Activated CD8-positive, alpha-beta T cell treated with anti-CD3 and anti-CD28 coated beads for 36 hours (primary cell): ENCODE measurements at regions of chr1 and their contacts with region 1.

Region 1: DNA sequence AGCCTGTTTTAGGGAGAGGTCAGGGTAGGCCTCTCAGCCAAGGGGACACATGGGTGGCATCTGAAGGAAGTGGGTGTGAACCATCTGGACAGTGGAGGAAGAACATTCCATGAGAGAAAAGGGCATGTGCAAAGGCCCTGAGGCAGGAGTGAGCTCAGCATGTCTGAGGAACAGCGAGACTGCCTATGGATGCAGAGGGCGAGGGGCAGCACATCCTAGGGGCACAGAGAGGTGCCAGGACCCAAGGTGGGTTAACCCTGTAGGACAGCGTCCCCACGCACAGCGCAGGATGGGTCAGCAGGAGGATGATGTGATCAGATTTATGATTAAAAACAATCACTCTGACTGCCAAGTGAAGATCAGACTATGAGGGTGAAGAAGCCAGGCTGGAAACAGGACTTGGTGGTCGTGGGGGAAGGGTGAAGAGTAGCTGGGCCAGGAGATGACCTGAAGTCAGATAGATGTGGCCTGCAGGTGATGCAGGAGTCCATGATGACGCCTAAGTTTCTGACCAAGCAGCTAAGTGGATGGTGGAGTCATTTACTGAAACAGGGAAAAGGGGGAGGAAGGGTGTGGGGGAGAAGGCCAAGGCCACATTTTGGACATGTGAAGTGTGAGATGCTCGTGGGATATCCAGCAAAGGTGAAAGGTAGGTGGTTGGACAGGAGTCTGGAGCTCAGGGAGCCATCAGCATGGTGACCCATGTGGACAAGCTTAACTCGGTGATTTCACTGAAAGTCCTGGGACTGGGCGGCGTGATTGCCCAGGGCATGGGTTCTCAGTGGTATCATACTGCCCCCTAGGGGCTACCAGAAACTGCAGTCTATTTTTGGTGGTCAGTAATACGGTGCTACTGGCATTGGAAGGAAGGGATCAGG is 37.8 kb downstream of the PABPC4 start:
- DNase-seq: peak; percentile 62
- ATAC-seq: peak; percentile 90
- H3K4me3 Mint-ChIP-seq: no peak overlapping the region
- H3K27ac Mint-ChIP-seq: no peak overlapping the region
- H3K4me1 Mint-ChIP-seq: peaks cover 2% of the 10 kb centered on the region
- H3K27me3 Mint-ChIP-seq: no peaks in the 10 kb centered on the region
- CTCF ChIP-seq: peak; percentile 90

Region 2: GRCh38 chr1:39481289-39481688 is 57.5 kb before region 1 on chr1:
- CTCF ChIA-PET with region 1: interaction called, 11 read pairs
- POLR2A ChIA-PET with region 1: no interaction called
- intact Hi-C with region 1: no loop called
- DNase-seq: no peak
- ATAC-seq: no peak
- H3K4me3 Mint-ChIP-seq: no peak overlapping the region
- H3K27ac Mint-ChIP-seq: no peak overlapping the region
- H3K4me1 Mint-ChIP-seq: no peaks in the 10 kb centered on the region
- H3K27me3 Mint-ChIP-seq: no peaks in the 10 kb centered on the region
- CTCF ChIP-seq: no peak

Region 3: DNA sequence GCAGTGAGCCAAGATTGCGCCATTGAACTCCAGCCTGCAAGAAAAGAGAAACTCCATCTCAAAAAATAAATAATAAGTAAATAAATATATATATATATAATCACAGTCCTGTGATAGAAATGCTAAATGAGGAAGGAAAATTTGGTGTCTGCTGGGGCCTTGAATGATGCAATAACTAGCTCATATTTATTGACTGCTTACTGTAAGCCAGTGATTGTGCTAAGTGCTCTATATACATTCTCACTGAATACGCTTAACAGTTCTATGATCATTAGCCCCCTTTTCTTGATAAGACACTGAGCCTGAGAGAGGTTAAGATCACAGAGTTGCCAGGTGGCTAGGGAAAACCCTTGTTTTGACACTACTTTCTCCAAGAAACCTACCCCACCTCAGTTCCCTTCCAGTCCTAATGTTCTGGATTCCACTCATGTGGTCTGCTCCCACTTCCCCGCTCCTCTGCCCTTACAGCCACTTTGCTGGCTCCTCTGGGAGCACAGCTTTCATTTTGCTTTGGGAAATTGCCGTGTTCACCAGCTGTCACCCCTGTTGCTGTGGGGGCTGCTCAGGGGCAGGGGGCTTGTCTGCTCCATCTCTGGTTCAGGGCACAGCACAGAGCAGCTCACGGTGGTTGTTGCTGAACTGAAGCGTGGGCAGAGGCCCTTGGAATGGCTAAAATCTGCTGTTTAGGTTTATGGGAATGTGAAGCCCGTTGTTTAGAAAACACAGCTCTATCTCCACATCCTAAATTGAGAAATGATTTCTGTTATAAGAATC is 49.8 kb before region 1 on chr1:
- CTCF ChIA-PET with region 1: interaction called, 12 read pairs
- POLR2A ChIA-PET with region 1: interaction called, 3 read pairs
- intact Hi-C with region 1: no loop called
- DNase-seq: no peak
- ATAC-seq: no peak
- H3K4me3 Mint-ChIP-seq: no peak overlapping the region
- H3K27ac Mint-ChIP-seq: no peak overlapping the region
- H3K4me1 Mint-ChIP-seq: peaks cover 7% of the 10 kb centered on the region
- H3K27me3 Mint-ChIP-seq: peaks cover 23% of the 10 kb centered on the region
- CTCF ChIP-seq: no peak